ENCODE measurements at regions of chr20 and their contacts with region 1.

Region 1: DNA sequence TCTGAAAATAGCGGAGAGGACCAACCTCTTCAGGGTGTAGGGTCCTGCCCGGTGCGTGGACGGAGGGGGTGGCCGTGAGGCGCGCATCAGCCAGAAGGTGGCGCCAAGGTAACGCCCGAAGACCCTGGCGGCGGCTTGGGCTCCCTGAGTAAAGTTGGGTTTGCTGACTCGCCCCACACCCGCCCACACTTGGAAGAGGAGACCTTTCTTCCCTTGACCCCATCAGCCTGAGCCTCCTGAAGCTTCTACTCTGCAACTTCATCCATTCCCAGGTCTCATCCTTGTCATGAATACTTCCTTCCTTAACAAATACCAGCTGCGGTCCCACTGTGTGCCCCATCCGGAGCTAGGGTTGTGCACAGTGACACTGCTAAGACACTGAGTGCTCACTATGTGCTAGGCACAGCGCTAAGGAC is 14.6 kb downstream of the CD40 start:
- DNase-seq: peak; percentile 34 to 72
- ATAC-seq: peak; percentile 70 to 86 (median 77)
- H3K4me3 ChIP-seq: no peak overlapping the region
- H3K4me3 Mint-ChIP-seq: no peak overlapping the region
- H3K27ac ChIP-seq: no peak overlapping the region
- H3K27ac Mint-ChIP-seq: no peak overlapping the region
- H3K4me1 ChIP-seq: peaks cover 5% of the 10 kb centered on the region
- H3K4me1 Mint-ChIP-seq: peaks cover 0 to 7% of the 10 kb centered on the region in 2 donors
- H3K27me3 ChIP-seq: peaks cover 2% of the 10 kb centered on the region
- H3K27me3 Mint-ChIP-seq: peaks cover 13 to 19% of the 10 kb centered on the region in 2 donors
- CTCF ChIP-seq: peak; percentile 50

Region 2: DNA sequence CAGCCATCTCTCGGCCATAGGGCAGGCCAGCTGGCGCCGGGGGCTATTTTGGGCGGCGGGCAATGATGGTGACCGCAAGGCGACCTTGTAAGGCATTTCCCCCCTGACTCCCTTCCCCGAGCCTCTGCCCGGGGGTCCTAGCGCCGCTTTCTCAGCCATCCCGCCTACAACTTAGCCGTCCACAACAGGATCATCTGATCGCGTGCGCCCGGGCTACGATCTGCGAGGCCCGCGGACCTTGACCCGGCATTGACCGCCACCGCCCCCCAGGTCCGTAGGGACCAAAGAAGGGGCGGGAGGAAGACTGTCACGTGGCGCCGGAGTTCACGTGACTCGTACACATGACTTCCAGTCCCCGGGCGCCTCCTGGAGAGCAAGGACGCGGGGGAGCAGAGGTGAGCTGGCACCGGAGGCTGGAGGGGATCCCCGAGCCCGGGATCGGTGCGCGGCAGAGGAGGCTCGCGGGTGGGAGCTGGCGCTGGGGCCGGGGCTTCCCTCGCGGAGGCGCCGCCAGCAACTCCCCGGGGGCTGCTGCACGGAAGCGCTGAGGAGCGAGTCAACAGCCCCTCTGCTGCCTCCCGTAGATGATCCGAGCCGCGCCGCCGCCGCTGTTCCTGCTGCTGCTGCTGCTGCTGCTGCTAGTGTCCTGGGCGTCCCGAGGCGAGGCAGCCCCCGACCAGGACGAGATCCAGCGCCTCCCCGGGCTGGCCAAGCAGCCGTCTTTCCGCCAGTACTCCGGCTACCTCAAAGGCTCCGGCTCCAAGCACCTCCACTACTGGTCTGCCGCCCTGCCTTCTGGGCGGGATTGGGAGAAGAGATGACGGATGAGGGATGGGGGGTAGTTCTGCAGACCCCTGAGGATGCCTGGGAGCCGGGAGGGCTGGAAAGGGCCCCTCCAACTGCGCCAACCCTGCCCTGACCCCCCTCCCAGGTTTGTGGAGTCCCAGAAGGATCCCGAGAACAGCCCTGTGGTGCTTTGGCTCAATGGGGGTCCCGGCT is 241.4 kb before region 1 on chr20 and contains the starts of genes CTSA and NEURL2:
- intact Hi-C with region 1: no loop called
- DNase-seq: peak; percentile 78 to 90
- ATAC-seq: peak; percentile 73 to 87 (median 86)
- H3K4me3 ChIP-seq: peak within 1 kb of the TSS; percentile 68
- H3K4me3 Mint-ChIP-seq: peak within 1 kb of the TSS; percentile 93
- H3K27ac ChIP-seq: peak within 1 kb of the TSS; percentile 32
- H3K27ac Mint-ChIP-seq: peak within 1 kb of the TSS; percentile 58 to 88
- H3K4me1 ChIP-seq: peaks cover 38% of the 10 kb centered on the region
- H3K4me1 Mint-ChIP-seq: peaks cover 5 to 24% of the 10 kb centered on the region in 2 donors
- H3K27me3 ChIP-seq: no peaks in the 10 kb centered on the region
- H3K27me3 Mint-ChIP-seq: no peaks in the 10 kb centered on the region
- CTCF ChIP-seq: no peak
- total RNA-seq, gene CTSA: 72.8 to 108 (median 86.8) TPM
- total RNA-seq, gene NEURL2: 0.89 to 1.4 (median 1.4) TPM

Region 3: DNA sequence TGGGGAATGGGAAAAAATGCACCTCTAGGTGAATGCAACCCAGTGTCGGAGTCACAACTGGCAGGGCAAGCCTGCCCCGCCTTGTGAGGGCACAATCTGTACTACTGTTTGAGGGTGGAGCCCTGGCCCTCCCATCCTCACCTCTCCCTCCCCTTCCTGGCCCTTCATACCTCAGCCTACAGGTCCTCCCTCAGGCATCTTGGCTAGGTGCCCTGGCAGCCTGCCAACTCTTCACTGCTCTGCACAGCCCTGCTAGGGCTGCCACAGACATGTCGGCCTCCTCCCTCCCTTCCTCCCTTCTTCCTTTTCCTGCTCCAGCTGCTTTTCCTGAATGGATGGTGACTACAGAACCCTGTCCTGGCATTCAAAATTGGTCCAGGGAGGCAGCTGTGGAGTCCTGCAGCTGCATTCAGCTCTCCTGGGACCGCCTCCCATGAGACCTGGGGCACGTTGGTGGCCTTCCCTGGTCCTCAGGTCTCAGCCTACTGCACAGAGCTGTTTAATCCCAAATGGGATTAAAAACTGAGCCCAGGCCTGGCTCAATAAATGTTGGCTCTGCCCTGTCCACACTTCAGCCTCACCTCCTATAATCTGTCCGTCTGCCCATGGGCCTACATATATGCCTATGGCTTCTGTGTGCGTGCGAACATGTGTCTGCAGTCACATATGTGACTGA is 122.9 kb after region 1 on chr20:
- intact Hi-C with region 1: no loop called
- DNase-seq: peak in 1 of 2 donors; percentile 33
- ATAC-seq: no peak
- H3K4me3 ChIP-seq: no peak overlapping the region
- H3K4me3 Mint-ChIP-seq: no peak overlapping the region
- H3K27ac ChIP-seq: no peak overlapping the region
- H3K27ac Mint-ChIP-seq: no peak overlapping the region
- H3K4me1 ChIP-seq: no peaks in the 10 kb centered on the region
- H3K4me1 Mint-ChIP-seq: no peaks in the 10 kb centered on the region
- H3K27me3 ChIP-seq: peaks cover 3% of the 10 kb centered on the region
- H3K27me3 Mint-ChIP-seq: peaks cover 32 to 38% of the 10 kb centered on the region in 2 donors
- CTCF ChIP-seq: no peak

Region 4: DNA sequence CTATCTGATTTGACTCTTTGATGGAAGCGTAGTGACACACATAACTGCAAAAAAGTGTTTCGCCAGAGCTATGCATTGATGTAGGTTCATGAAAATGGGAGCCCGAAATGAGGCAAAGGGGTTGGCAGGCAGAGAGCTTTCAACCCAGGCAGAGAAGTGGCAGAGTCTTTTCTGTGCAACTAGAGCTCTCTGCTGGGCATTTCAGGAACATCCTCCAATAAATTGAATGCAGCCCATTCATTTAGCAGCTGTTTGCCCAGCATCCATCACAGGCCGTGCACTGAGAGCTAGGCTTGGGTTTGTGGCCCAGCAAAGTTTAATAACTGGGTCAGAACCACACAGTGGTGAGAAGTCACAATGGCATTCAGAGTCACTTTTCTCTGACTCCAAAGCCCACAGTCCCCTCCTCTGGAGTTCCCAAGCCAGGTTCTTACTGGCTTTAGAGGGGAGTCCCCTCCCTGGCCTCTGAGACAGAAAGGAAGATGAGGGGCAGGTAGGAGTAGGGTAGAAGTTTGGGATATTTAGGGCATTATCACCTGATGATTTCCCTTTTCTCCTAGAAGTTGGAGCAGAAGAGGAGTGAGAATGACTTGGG is 305.5 kb after region 1 on chr20:
- intact Hi-C with region 1: loop called (anchors 2 kb)
- DNase-seq: peak in 1 of 2 donors; percentile 53
- ATAC-seq: peak in 1 of 3 donors; percentile 50
- H3K4me3 ChIP-seq: no peak overlapping the region
- H3K4me3 Mint-ChIP-seq: no peak overlapping the region
- H3K27ac ChIP-seq: no peak overlapping the region
- H3K27ac Mint-ChIP-seq: no peak overlapping the region
- H3K4me1 ChIP-seq: no peaks in the 10 kb centered on the region
- H3K4me1 Mint-ChIP-seq: no peaks in the 10 kb centered on the region
- H3K27me3 ChIP-seq: no peaks in the 10 kb centered on the region
- H3K27me3 Mint-ChIP-seq: peaks cover 6 to 12% of the 10 kb centered on the region in 2 donors
- CTCF ChIP-seq: no peak

Region 5: DNA sequence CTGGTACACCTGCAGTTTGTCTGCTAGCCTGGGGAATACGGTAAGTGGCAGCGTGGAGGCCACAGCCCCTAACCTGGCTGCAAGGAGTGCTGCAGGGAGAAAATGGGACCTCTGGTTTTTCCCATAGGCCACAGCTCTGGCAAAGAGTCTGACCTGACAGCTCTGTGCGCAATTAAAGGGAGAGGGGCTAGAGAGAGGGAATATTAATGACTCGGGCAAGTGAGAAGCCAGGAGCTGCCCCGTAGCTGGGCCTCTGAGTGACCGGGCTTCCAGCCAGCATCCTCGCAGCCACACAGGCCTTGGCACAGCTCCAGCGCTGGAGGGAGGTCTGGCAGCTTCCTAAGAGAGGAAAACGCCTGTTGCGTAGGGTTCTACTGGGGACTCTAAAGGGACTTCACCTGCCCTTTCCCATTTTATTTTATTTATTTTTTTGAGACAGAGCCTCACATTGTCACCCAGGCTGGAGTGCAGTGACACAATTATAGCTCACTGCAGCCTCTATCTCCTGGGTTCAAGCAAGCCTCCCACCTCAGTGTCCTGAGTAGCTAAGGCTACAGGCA is 435.9 kb after region 1 on chr20:
- intact Hi-C with region 1: no loop called
- DNase-seq: no peak
- ATAC-seq: no peak
- H3K4me3 ChIP-seq: no peak overlapping the region
- H3K4me3 Mint-ChIP-seq: no peak overlapping the region
- H3K27ac ChIP-seq: no peak overlapping the region
- H3K27ac Mint-ChIP-seq: no peak overlapping the region
- H3K4me1 ChIP-seq: no peaks in the 10 kb centered on the region
- H3K4me1 Mint-ChIP-seq: no peaks in the 10 kb centered on the region
- H3K27me3 ChIP-seq: no peaks in the 10 kb centered on the region
- H3K27me3 Mint-ChIP-seq: peaks cover 8 to 24% of the 10 kb centered on the region in 2 donors
- CTCF ChIP-seq: no peak